PC-3 (cell line): ENCODE measurements at regions of chr4 and their contacts with region 1.

Region 1: DNA sequence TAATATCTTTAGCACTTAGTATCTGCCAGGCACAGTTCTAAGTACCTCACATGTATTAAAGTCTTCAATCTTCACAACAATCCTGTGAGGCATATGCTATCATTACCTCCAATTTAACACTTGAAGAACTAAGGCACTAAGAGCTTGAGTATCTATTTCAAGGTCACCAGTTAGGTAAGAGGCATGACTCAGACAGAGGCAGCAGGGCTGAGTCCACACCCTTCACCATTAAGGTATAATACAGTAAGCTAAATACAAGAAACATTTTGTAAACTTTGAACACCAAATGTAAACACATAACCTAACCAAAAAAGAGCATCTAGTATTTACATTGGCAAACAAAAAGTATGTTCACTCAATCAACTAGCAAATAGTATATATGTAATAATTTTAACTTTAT is 1410.9 kb downstream of the PCDH18 start:
- DNase-seq: peak; percentile 19
- ATAC-seq: peak; percentile 94
- H3K4me3 ChIP-seq: no peak overlapping the region
- H3K27ac ChIP-seq: no peak overlapping the region
- H3K4me1 ChIP-seq: no peaks in the 10 kb centered on the region
- H3K27me3 ChIP-seq: no peaks in the 10 kb centered on the region
- CTCF ChIP-seq: no peak

Region 2: GRCh38 chr4:136150046-136150445 is 28.6 kb after region 1 on chr4:
- CTCF ChIA-PET with region 1: no interaction called
- POLR2A ChIA-PET with region 1: no interaction called
- intact Hi-C with region 1: no loop called
- DNase-seq: no peak
- ATAC-seq: no peak
- H3K4me3 ChIP-seq: no peak overlapping the region
- H3K27ac ChIP-seq: no peak overlapping the region
- H3K4me1 ChIP-seq: no peaks in the 10 kb centered on the region
- H3K27me3 ChIP-seq: no peaks in the 10 kb centered on the region
- CTCF ChIP-seq: no peak

Region 3: DNA sequence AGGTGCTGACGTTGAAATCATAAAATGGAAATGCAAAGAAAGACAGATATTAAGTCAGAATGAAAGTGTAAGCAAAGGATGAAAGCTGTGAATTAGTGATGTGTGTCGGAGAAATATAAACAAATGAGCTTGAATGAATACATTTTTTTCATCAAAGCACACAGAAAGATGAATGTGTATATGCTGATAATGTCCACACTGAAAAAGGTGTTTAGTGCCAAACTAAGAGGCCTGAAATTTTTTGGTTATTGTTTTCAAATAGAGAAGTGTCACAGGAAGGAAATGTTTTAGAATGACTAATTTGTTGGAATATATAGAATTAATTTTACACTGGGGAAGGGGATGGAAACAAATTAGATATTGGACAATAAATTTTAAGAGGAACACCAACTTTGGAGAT is 193.3 kb after region 1 on chr4:
- CTCF ChIA-PET with region 1: no interaction called
- POLR2A ChIA-PET with region 1: no interaction called
- intact Hi-C with region 1: no loop called
- DNase-seq: no peak
- ATAC-seq: no peak
- H3K4me3 ChIP-seq: no peak overlapping the region
- H3K27ac ChIP-seq: no peak overlapping the region
- H3K4me1 ChIP-seq: peaks cover 3% of the 10 kb centered on the region
- H3K27me3 ChIP-seq: no peaks in the 10 kb centered on the region
- CTCF ChIP-seq: no peak

Region 4: DNA sequence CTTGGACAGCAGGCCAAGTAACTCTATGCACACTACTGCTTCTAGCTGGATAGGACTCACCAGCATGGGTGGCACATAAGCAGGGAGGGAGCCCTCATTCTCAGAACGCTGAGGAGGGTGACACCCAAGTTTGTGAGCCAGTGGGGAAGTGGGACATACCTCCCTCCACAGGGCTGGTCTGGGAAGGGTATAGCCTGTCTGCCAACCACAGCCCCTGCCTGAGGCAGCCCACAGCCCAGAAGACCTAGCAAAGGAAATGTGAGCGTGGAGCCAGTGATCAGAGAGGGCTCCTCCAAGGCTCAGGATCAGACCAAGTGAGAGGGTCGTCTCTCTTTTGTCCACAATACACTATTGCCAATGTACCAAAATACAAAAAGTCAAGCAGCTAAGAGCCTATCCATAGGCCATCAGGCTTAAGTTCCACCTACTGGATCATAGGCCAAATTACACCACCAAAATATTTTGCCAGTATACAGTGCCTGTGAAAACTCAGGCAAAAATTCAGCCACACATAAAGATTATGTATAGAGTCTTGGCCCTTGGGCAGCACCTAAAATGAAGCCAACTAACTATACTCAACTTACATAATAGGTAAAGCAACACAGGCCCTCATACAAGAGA is 207.7 kb after region 1 on chr4:
- CTCF ChIA-PET with region 1: no interaction called
- POLR2A ChIA-PET with region 1: no interaction called
- intact Hi-C with region 1: loop called (anchors 10 kb)
- DNase-seq: peak; percentile 20
- ATAC-seq: peak; percentile 70
- H3K4me3 ChIP-seq: no peak overlapping the region
- H3K27ac ChIP-seq: no peak overlapping the region
- H3K4me1 ChIP-seq: no peaks in the 10 kb centered on the region
- H3K27me3 ChIP-seq: no peaks in the 10 kb centered on the region
- CTCF ChIP-seq: peak; percentile 50